ENCODE measurements at regions of chr14 and their contacts with region 1.

Region 1: GRCh38 chr14:22163051-22163450 is 426.0 kb downstream of the DAD1 start:
- DNase-seq: peak in 2 of 9 experiments; percentile 26 to 49
- ATAC-seq: peak; percentile 56
- H3K4me3 ChIP-seq: no peak overlapping the region
- H3K4me3 Mint-ChIP-seq: peak overlapping the region; percentile 84
- H3K27ac ChIP-seq: no peak overlapping the region
- H3K27ac Mint-ChIP-seq: peak overlapping the region; percentile 92
- H3K4me1 ChIP-seq: no peaks in the 10 kb centered on the region
- H3K4me1 Mint-ChIP-seq: peaks cover 16% of the 10 kb centered on the region
- H3K27me3 ChIP-seq: no peaks in the 10 kb centered on the region
- H3K27me3 Mint-ChIP-seq: no peaks in the 10 kb centered on the region
- CTCF ChIP-seq: no peak

Region 2: GRCh38 chr14:21647380-21647779 is 515.7 kb before region 1 on chr14:
- CTCF ChIA-PET with region 1: no interaction called
- POLR2A ChIA-PET with region 1: no interaction called
- intact Hi-C with region 1: no loop called
- DNase-seq: no peak
- ATAC-seq: no peak
- H3K4me3 ChIP-seq: no peak overlapping the region
- H3K4me3 Mint-ChIP-seq: no peak overlapping the region
- H3K27ac ChIP-seq: no peak overlapping the region
- H3K27ac Mint-ChIP-seq: no peak overlapping the region
- H3K4me1 ChIP-seq: no peaks in the 10 kb centered on the region
- H3K4me1 Mint-ChIP-seq: no peaks in the 10 kb centered on the region
- H3K27me3 ChIP-seq: peaks cover 0 to 4% of the 10 kb centered on the region in 2 experiments
- H3K27me3 Mint-ChIP-seq: peaks cover 27% of the 10 kb centered on the region
- CTCF ChIP-seq: no peak

Region 3: DNA sequence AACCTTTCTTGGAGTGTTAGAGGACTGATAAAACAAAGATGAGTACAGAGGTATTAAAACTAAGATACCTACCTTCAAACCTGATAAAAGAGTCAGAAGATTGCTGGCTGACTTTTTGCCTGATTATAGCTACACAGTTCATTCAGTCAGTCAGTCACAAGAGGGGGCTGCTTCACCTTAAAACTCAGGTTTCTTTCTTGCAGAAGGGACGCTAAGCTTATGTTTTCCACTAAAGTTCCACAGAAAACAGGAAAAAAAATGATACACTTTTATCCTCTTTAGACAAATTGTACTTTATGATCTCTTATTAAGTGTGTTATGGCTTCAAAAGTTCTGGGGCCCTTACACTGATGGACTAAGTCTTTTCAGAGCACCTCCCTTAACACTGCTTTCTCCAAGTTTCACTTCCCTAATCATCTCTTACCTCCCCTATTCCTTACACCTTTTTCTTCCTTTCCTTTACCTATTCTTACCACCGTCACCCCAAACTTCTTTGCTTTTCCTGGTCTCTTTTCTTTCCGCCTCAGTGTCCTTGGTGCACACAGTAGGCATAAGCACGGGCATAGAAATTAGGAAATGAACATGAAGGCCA is 40.7 kb before region 1 on chr14:
- CTCF ChIA-PET with region 1: interaction called, 3 read pairs
- POLR2A ChIA-PET with region 1: no interaction called
- intact Hi-C with region 1: loop called in 1 of 2 experiments (anchors 5 kb)
- DNase-seq: peak in 3 of 9 experiments; percentile 24 to 62 (median 43)
- ATAC-seq: peak; percentile 43
- H3K4me3 ChIP-seq: no peak overlapping the region
- H3K4me3 Mint-ChIP-seq: peak overlapping the region; percentile 79
- H3K27ac ChIP-seq: peak overlapping the region in 1 of 2 experiments; percentile 54
- H3K27ac Mint-ChIP-seq: peak overlapping the region; percentile 93
- H3K4me1 ChIP-seq: no peaks in the 10 kb centered on the region
- H3K4me1 Mint-ChIP-seq: peaks cover 19% of the 10 kb centered on the region
- H3K27me3 ChIP-seq: no peaks in the 10 kb centered on the region
- H3K27me3 Mint-ChIP-seq: no peaks in the 10 kb centered on the region
- CTCF ChIP-seq: peak; percentile 14